Dendritic cell treated with granulocyte-macrophage colony-stimulating factor and Interleukin-4, amounts not matched to agents 40 ng/mL and 50 ng/mL, for 4 days (primary cell): ENCODE measurements at regions of chr11 and their contacts with region 1.

Region 1: GRCh38 chr11:30454132-30454531 is 131.2 kb downstream of the ARL14EP start:
- H3K4me3 Mint-ChIP-seq: no peak overlapping the region
- H3K27ac Mint-ChIP-seq: peak overlapping the region; percentile 37
- H3K4me1 Mint-ChIP-seq: peaks cover 46% of the 10 kb centered on the region
- H3K27me3 Mint-ChIP-seq: peaks cover 14% of the 10 kb centered on the region

Region 2: GRCh38 chr11:30422447-30423274 is 31.5 kb before region 1 on chr11:
- intact Hi-C with region 1: no loop called
- H3K4me3 Mint-ChIP-seq: no peak overlapping the region
- H3K27ac Mint-ChIP-seq: no peak overlapping the region
- H3K4me1 Mint-ChIP-seq: no peaks in the 10 kb centered on the region
- H3K27me3 Mint-ChIP-seq: no peaks in the 10 kb centered on the region

Region 3: GRCh38 chr11:30488304-30488998 is 34.3 kb after region 1 on chr11:
- intact Hi-C with region 1: loop called (anchors 5 kb)
- H3K4me3 Mint-ChIP-seq: no peak overlapping the region
- H3K27ac Mint-ChIP-seq: peak overlapping the region; percentile 40
- H3K4me1 Mint-ChIP-seq: peaks cover 40% of the 10 kb centered on the region
- H3K27me3 Mint-ChIP-seq: no peaks in the 10 kb centered on the region

Region 4: DNA sequence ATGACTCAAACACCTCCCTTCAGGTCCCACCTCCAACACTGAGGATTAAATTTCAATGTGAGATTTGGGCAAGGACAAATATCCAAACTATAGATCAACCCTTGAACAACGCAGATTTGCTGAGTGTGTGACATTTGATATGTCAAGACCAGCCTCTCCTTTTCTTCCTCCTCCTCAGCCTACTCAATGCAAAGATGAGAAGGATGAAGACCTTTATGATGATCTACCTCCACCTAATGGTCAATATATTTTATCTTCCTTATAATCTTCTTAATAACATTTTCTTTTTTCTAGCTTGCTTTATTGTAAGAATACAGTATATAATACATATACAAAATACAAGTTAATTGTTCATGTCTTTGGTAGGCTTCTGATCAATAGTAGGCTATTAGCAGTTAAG is 199.5 kb after region 1 on chr11:
- intact Hi-C with region 1: no loop called
- H3K4me3 Mint-ChIP-seq: no peak overlapping the region
- H3K27ac Mint-ChIP-seq: no peak overlapping the region
- H3K4me1 Mint-ChIP-seq: no peaks in the 10 kb centered on the region
- H3K27me3 Mint-ChIP-seq: no peaks in the 10 kb centered on the region